HepG2 (cell line): ENCODE measurements at regions of chr14 and their contacts with region 1.

Region 1: DNA sequence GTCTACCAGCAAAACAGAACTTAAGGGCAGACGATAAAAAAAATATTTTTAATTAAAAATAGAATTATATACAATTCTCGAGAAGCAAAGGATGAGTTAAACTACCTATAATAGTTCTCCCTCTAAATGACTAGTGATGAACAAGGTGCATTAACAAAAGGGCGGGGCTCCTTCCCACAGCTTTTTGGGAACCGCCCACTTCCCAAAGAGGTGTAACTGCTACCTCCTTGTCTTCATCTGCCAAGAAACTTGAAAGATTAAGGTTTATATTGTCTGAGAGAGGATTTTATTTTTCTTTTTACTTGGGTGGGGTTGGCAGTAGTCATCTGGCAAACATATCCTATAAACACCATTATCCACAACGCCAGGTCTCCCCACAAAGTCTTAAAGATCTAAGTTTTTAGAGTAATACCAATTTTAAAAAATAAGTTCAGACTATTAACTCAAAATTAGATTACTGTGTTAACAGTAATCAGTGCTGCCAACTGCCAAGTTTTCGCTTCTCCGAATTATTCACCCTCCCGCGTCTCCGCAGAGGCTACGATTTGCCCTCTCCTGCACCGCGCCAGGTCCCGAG is 931 bp downstream of the RALGAPA1 start:
- DNase-seq: no peak
- ATAC-seq: no peak
- H3K4me3 ChIP-seq: peak overlapping the region; percentile 85 to 96 (median 86)
- H3K27ac ChIP-seq: peak overlapping the region; percentile 89
- H3K4me1 ChIP-seq: peaks cover 58% of the 10 kb centered on the region
- H3K27me3 ChIP-seq: no peaks in the 10 kb centered on the region; a peak in 1 of 5 replicates
- CTCF ChIP-seq: no peak
- EP300 ChIP-seq: no peak
- POLR2A ChIP-seq: no peak; a peak in 1 of 4 replicates
- RAD21 ChIP-seq: 0 out of 2 replicates have a peak, but pooled peaks have one; percentile 15

Region 2: DNA sequence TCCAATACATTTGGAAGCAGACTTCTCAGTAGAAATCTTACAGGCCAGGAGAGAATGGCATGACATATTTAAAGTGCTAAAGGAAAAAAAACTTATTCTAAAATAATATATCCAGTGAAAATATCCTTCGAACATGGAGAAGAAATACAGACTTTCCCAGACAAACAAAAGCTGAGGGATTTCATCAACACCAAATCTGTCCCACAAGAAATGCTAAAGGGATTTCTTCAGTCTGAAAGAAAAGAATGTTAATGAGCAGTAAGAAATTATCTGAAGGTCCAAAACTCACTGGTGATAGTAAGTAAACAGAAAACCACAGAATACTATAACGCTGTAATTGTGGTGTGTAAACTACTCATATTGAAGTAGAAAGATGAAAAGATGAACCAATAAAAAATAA is 170.3 kb before region 1 on chr14:
- CTCF ChIA-PET with region 1: no interaction called
- POLR2A ChIA-PET with region 1: no interaction called
- in situ Hi-C with region 1: no loop called
- intact Hi-C with region 1: loop called (anchors 5 kb)
- DNase-seq: no peak
- ATAC-seq: no peak
- H3K4me3 ChIP-seq: no peak overlapping the region
- H3K27ac ChIP-seq: no peak overlapping the region
- H3K4me1 ChIP-seq: no peaks in the 10 kb centered on the region
- H3K27me3 ChIP-seq: no peaks in the 10 kb centered on the region
- CTCF ChIP-seq: no peak
- EP300 ChIP-seq: no peak
- POLR2A ChIP-seq: no peak
- RAD21 ChIP-seq: no peak

Region 3: GRCh38 chr14:35708073-35708472 is 100.1 kb before region 1 on chr14:
- CTCF ChIA-PET with region 1: no interaction called
- POLR2A ChIA-PET with region 1: no interaction called
- in situ Hi-C with region 1: no loop called
- intact Hi-C with region 1: loop called (anchors 5 kb)
- DNase-seq: no peak
- ATAC-seq: no peak
- H3K4me3 ChIP-seq: no peak overlapping the region
- H3K27ac ChIP-seq: no peak overlapping the region
- H3K4me1 ChIP-seq: no peaks in the 10 kb centered on the region
- H3K27me3 ChIP-seq: no peaks in the 10 kb centered on the region
- CTCF ChIP-seq: no peak
- EP300 ChIP-seq: no peak
- POLR2A ChIP-seq: no peak
- RAD21 ChIP-seq: no peak

Region 4: GRCh38 chr14:35758523-35759129 is 49.5 kb before region 1 on chr14:
- CTCF ChIA-PET with region 1: no interaction called
- POLR2A ChIA-PET with region 1: interaction called, 5 read pairs
- in situ Hi-C with region 1: no loop called
- intact Hi-C with region 1: loop called (anchors 2 kb)
- DNase-seq: peak; percentile 83
- ATAC-seq: peak; percentile 90
- H3K4me3 ChIP-seq: no peak overlapping the region
- H3K27ac ChIP-seq: peak overlapping the region; percentile 48
- H3K4me1 ChIP-seq: peaks cover 17% of the 10 kb centered on the region
- H3K27me3 ChIP-seq: no peaks in the 10 kb centered on the region
- CTCF ChIP-seq: no peak
- EP300 ChIP-seq: peak in 1 of 2 experiments; percentile 53; a peak in 1 of 4 replicates
- POLR2A ChIP-seq: no peak
- RAD21 ChIP-seq: no peak

Region 5: GRCh38 chr14:35826218-35826951 is 18.2 kb after region 1 on chr14 and contains the start of gene BRMS1L:
- CTCF ChIA-PET with region 1: interaction called, 3 read pairs
- POLR2A ChIA-PET with region 1: interaction called, 81 read pairs
- in situ Hi-C with region 1: no loop called
- intact Hi-C with region 1: loop called (anchors 1 kb)
- DNase-seq: peak; percentile 100
- ATAC-seq: peak; percentile 96
- H3K4me3 ChIP-seq: peak within 1 kb of the TSS; percentile 78 to 99 (median 95)
- H3K27ac ChIP-seq: peak within 1 kb of the TSS; percentile 95
- H3K4me1 ChIP-seq: peaks cover 45% of the 10 kb centered on the region
- H3K27me3 ChIP-seq: no peaks in the 10 kb centered on the region; a peak in 1 of 5 replicates
- CTCF ChIP-seq: peak; percentile 51
- EP300 ChIP-seq: peak in 1 of 2 experiments; percentile 50; a peak in 2 of 4 replicates
- POLR2A ChIP-seq: peak in 1 of 2 experiments; percentile 100; a peak in 2 of 4 replicates
- RAD21 ChIP-seq: peak; percentile 72; the same call in 1 of the 2 replicates
- total RNA-seq, gene BRMS1L: 23.8 and 35.5 TPM in 2 replicates

Region 6: GRCh38 chr14:36070031-36070719 is 262.0 kb after region 1 on chr14:
- CTCF ChIA-PET with region 1: no interaction called
- POLR2A ChIA-PET with region 1: no interaction called
- in situ Hi-C with region 1: no loop called
- intact Hi-C with region 1: no loop called
- DNase-seq: peak; percentile 84
- ATAC-seq: peak; percentile 97
- H3K4me3 ChIP-seq: no peak overlapping the region
- H3K27ac ChIP-seq: no peak overlapping the region
- H3K4me1 ChIP-seq: no peaks in the 10 kb centered on the region
- H3K27me3 ChIP-seq: peaks cover 0 to 2% of the 10 kb centered on the region in 2 experiments; a peak in 2 of 5 replicates
- CTCF ChIP-seq: peak; percentile 98
- EP300 ChIP-seq: no peak
- POLR2A ChIP-seq: no peak
- RAD21 ChIP-seq: peak; percentile 95